CD14-positive monocyte (primary cell): ENCODE measurements at regions of chr12 and their contacts with region 1.

Region 1: GRCh38 chr12:3885277-3886094 is 12.3 kb upstream of the PARP11 start:
- DNase-seq: peak; percentile 34 to 50 (median 45)
- H3K4me3 ChIP-seq: no peak overlapping the region
- H3K4me3 Mint-ChIP-seq: peak overlapping the region in 1 of 2 donors; percentile 46
- H3K27ac ChIP-seq: no peak overlapping the region
- H3K27ac Mint-ChIP-seq: peak overlapping the region in 2 of 7 donors; percentile 34 to 37
- H3K4me1 ChIP-seq: peaks cover 6 to 13% of the 10 kb centered on the region in 2 donors
- H3K4me1 Mint-ChIP-seq: peaks cover 15% of the 10 kb centered on the region
- H3K27me3 ChIP-seq: no peaks in the 10 kb centered on the region
- H3K27me3 Mint-ChIP-seq: peaks cover 0 to 6% (median 0%) of the 10 kb centered on the region in 3 donors
- CTCF ChIP-seq: peak; percentile 89

Region 2: DNA sequence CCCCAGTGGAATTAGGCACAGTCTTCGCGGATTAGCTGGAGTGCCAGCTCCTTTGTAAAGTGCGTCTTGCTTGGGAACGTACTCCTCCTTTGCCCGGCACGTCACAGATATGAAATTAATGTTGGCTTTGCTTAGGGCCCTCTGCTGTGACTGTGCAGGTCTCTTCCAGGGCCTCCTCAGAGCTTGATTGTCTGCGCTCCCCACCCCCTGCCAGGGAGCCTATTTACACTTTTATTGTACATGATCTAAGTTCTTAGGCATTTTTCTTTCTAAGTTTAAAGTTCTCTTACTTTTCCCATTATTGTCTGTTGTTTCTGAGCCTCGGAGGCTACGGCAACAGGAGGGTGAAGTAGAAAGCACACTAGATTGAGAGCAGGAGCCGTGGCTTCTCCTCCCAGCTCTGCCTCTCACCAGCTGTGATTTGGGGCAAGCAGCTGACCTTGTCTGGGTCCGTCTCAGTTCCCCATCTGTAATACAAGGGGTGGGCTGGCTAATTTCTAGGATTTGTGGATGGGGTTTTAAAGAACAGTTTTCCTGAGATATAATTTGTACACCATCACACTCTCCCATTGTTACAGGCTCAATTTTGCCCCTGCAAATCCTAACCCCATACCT is 726.5 kb before region 1 on chr12:
- intact Hi-C with region 1: no loop called
- DNase-seq: no peak
- H3K4me3 ChIP-seq: no peak overlapping the region
- H3K4me3 Mint-ChIP-seq: no peak overlapping the region
- H3K27ac ChIP-seq: no peak overlapping the region
- H3K27ac Mint-ChIP-seq: no peak overlapping the region
- H3K4me1 ChIP-seq: no peaks in the 10 kb centered on the region
- H3K4me1 Mint-ChIP-seq: no peaks in the 10 kb centered on the region
- H3K27me3 ChIP-seq: peaks cover 0 to 11% of the 10 kb centered on the region in 2 donors
- H3K27me3 Mint-ChIP-seq: peaks cover 8 to 35% (median 19%) of the 10 kb centered on the region in 3 donors
- CTCF ChIP-seq: no peak

Region 3: GRCh38 chr12:3990501-3991280 is 105.2 kb after region 1 on chr12:
- intact Hi-C with region 1: loop called (anchors 2 to 5 kb)
- DNase-seq: no peak
- H3K4me3 ChIP-seq: no peak overlapping the region
- H3K4me3 Mint-ChIP-seq: no peak overlapping the region
- H3K27ac ChIP-seq: no peak overlapping the region
- H3K27ac Mint-ChIP-seq: no peak overlapping the region
- H3K4me1 ChIP-seq: no peaks in the 10 kb centered on the region
- H3K4me1 Mint-ChIP-seq: peaks cover 10% of the 10 kb centered on the region
- H3K27me3 ChIP-seq: no peaks in the 10 kb centered on the region
- H3K27me3 Mint-ChIP-seq: peaks cover 2 to 4% (median 3%) of the 10 kb centered on the region in 3 donors
- CTCF ChIP-seq: no peak

Region 4: GRCh38 chr12:3998968-3999826 is 113.7 kb after region 1 on chr12:
- intact Hi-C with region 1: loop called (anchors 2 to 5 kb)
- DNase-seq: no peak
- H3K4me3 ChIP-seq: no peak overlapping the region
- H3K4me3 Mint-ChIP-seq: no peak overlapping the region
- H3K27ac ChIP-seq: no peak overlapping the region
- H3K27ac Mint-ChIP-seq: peak overlapping the region in 1 of 7 donors; percentile 34
- H3K4me1 ChIP-seq: no peaks in the 10 kb centered on the region
- H3K4me1 Mint-ChIP-seq: peaks cover 2% of the 10 kb centered on the region
- H3K27me3 ChIP-seq: no peaks in the 10 kb centered on the region
- H3K27me3 Mint-ChIP-seq: peaks cover 0 to 4% (median 2%) of the 10 kb centered on the region in 3 donors
- CTCF ChIP-seq: no peak

Region 5: DNA sequence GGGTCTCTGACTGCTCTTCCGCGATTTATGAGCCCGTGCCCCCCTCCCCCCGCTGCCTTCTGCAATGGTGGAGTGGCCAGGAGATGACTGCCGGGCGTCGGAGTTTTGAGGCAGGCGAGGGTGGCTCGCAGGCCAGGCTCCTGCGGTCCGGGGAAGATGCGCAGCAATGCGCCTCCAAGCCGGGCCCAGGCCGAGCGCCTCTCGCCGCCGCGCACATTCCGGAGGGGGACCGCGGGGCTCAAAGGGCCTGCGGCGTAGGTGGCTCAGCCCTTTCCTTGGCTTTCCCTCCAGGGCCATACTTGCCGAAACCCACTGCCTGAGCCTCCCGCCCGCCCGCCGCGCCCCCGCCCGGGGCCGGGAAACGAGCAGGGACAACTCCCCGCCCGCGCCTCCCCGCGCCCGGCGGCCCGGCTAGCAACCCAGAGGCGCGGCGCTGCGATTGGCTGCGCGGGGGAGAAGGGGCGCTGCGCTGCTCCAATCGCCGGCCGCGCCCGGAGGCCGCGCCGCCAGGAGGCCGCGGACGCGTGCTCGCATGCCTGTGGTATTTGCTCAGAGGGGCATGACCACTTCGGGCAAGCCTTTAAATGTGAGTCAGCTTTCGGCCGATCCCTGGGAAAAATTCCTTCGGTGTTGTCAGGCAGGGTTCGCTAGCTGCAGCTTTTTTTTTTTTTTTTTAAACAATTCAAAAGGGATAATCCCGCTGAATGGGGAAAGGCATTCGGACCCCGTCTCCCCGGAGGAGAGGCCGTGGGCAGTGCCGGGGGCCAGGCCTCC is 145.6 kb after region 1 on chr12:
- intact Hi-C with region 1: loop called (anchors 5 to 10 kb)
- DNase-seq: peak; percentile 60 to 93 (median 73)
- H3K4me3 ChIP-seq: peak overlapping the region; percentile 18 to 62 (median 25)
- H3K4me3 Mint-ChIP-seq: peak overlapping the region; percentile 67 to 86
- H3K27ac ChIP-seq: no peak overlapping the region
- H3K27ac Mint-ChIP-seq: no peak overlapping the region
- H3K4me1 ChIP-seq: peaks cover 13 to 24% of the 10 kb centered on the region in 2 donors
- H3K4me1 Mint-ChIP-seq: peaks cover 19% of the 10 kb centered on the region
- H3K27me3 ChIP-seq: peaks cover 7 to 14% of the 10 kb centered on the region in 2 donors
- H3K27me3 Mint-ChIP-seq: peaks cover 12 to 32% (median 21%) of the 10 kb centered on the region in 3 donors
- CTCF ChIP-seq: no peak

Region 6: GRCh38 chr12:4037747-4038312 is 152.3 kb after region 1 on chr12:
- intact Hi-C with region 1: loop called (anchors 5 to 10 kb)
- DNase-seq: peak in 2 of 3 donors; percentile 18 to 19
- H3K4me3 ChIP-seq: no peak overlapping the region
- H3K4me3 Mint-ChIP-seq: peak overlapping the region in 1 of 2 donors; percentile 44
- H3K27ac ChIP-seq: no peak overlapping the region
- H3K27ac Mint-ChIP-seq: no peak overlapping the region
- H3K4me1 ChIP-seq: peaks cover 21 to 27% of the 10 kb centered on the region in 2 donors
- H3K4me1 Mint-ChIP-seq: peaks cover 25% of the 10 kb centered on the region
- H3K27me3 ChIP-seq: no peaks in the 10 kb centered on the region
- H3K27me3 Mint-ChIP-seq: peaks cover 3 to 18% (median 11%) of the 10 kb centered on the region in 3 donors
- CTCF ChIP-seq: peak; percentile 68

Region 7: GRCh38 chr12:4091016-4091743 is 205.7 kb after region 1 on chr12:
- intact Hi-C with region 1: loop called in 1 of 2 experiments (anchors 10 kb)
- DNase-seq: peak; percentile 7 to 65 (median 9)
- H3K4me3 ChIP-seq: no peak overlapping the region
- H3K4me3 Mint-ChIP-seq: peak overlapping the region in 1 of 2 donors; percentile 21
- H3K27ac ChIP-seq: no peak overlapping the region
- H3K27ac Mint-ChIP-seq: peak overlapping the region in 2 of 7 donors; percentile 43 to 88
- H3K4me1 ChIP-seq: peaks cover 13 to 15% of the 10 kb centered on the region in 2 donors
- H3K4me1 Mint-ChIP-seq: peaks cover 13% of the 10 kb centered on the region
- H3K27me3 ChIP-seq: no peaks in the 10 kb centered on the region
- H3K27me3 Mint-ChIP-seq: peaks cover 2 to 6% (median 5%) of the 10 kb centered on the region in 3 donors
- CTCF ChIP-seq: no peak